Head of caudate nucleus (tissue), 42 donors: ENCODE measurements at regions of chr18 and their contacts with region 1.

Region 1: GRCh38 chr18:48663931-48664847 is 125.4 kb downstream of the CTIF start:
- DNase-seq: peak; percentile 56 to 95 (median 86)

Region 2: GRCh38 chr18:48545757-48546321 is 118.3 kb before region 1 on chr18:
- intact Hi-C with region 1: loop called (anchors 5 kb)
- DNase-seq: peak; percentile 68 to 94 (median 86)

Region 3: GRCh38 chr18:48590678-48591077 is 73.5 kb before region 1 on chr18:
- intact Hi-C with region 1: loop called (anchors 10 kb)
- DNase-seq: no peak

Region 4: GRCh38 chr18:48827291-48828193 is 163.4 kb after region 1 on chr18:
- intact Hi-C with region 1: no loop called
- DNase-seq: peak in 23 of 42 donors; percentile 4 to 42 (median 14)